OCI-LY7 (cell line): ENCODE measurements at regions of chr3 and their contacts with region 1.

Region 1: DNA sequence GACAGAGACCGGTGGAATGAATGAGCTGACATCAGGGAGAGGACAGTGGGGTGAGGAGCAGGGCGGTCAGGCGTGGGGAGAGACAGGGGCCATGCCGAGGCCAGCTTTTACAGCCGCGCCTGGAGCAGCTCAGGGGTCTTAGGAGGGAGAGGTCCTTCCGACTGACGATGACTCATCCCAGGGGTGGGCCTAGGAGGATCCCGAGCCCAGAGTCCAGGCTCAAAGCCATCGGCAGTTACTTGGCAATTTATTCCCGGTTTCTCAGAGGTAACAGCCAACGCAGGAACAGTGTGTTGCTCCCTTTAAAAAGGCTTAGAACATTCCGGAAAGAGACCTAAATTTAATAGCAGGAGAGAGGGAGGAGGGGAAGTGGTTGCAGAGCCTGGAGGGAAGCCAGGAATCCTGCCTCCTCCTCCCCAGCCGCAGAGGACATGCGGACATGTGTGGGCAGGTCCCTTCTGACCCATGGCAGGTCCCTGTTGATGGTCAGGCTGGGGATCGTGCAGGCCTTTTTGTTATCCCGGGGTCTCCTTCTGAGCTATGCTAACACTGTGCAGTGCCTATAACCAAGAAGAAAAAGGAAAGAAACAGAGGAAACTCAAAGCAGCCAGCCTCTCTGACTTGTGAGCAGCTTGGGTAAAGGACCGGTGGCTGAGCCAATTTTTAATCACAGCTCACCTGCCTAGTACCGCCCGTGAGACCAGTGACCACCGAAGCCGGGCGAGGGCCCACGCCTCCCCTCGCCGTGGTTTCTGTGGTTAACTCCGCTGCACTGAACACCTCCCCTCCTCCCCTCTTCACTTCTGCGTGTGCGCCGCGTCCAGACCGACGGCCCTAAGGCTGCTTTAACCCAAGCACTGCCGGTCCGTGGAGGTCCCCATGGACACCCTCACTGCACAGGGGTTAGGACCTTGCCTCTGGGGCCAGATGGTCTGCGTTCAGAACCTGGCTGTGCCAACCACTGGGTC is 392.4 kb upstream of the PROK2 start:
- DNase-seq: peak; percentile 64
- H3K4me3 ChIP-seq: peak overlapping the region; percentile 33
- H3K27ac ChIP-seq: peak overlapping the region; percentile 51
- H3K4me1 ChIP-seq: peaks cover 39% of the 10 kb centered on the region
- CTCF ChIP-seq: no peak

Region 2: DNA sequence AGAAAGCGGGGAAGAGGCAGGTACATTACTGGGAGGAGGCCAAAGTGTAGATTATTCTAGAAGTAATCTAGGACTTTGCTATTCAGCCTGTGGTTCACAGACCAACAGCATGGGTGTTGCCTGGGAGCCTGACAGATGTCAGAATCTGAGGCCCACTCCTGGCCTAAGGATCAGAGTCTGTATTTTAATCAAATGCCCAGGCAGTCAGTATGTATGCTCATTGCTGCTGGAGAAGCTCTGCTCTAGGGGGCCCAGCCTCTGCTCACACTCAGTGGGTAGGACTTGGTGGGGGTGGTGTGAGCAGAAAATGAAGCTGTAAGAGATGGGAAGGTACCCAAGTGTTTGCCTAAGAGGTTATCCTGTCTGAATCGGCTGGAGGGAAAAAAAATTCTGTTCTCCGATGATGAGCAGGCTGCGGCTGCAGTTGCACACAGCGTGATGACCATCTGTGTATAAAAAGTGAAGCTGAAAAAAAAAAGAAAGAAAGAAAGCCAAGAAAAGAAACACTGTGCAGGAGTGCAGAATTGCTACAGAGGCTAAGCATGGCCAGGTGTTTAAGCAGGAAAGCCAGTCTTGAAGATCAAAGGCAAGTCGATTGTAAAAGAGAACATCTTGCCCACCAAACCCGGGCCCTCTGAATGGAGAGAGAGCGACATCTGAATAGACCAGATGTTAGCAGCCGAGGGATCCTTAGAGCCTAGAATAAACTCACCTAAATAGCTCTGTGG is 517.3 kb before region 1 on chr3:
- CTCF ChIA-PET with region 1: no interaction called
- POLR2A ChIA-PET with region 1: no interaction called
- intact Hi-C with region 1: loop called (anchors 10 kb)
- DNase-seq: peak; percentile 94
- H3K4me3 ChIP-seq: peak overlapping the region; percentile 30
- H3K27ac ChIP-seq: peak overlapping the region; percentile 92
- H3K4me1 ChIP-seq: peaks cover 56% of the 10 kb centered on the region
- CTCF ChIP-seq: no peak

Region 3: GRCh38 chr3:72196377-72196929 is 19.1 kb after region 1 on chr3:
- CTCF ChIA-PET with region 1: no interaction called
- POLR2A ChIA-PET with region 1: no interaction called
- intact Hi-C with region 1: no loop called
- DNase-seq: no peak
- H3K4me3 ChIP-seq: no peak overlapping the region
- H3K27ac ChIP-seq: no peak overlapping the region
- H3K4me1 ChIP-seq: no peaks in the 10 kb centered on the region
- CTCF ChIP-seq: no peak

Region 4: GRCh38 chr3:72439321-72440183 is 262.2 kb after region 1 on chr3:
- CTCF ChIA-PET with region 1: no interaction called
- POLR2A ChIA-PET with region 1: no interaction called
- intact Hi-C with region 1: loop called (anchors 2 kb)
- DNase-seq: peak; percentile 37
- H3K4me3 ChIP-seq: peak overlapping the region; percentile 43
- H3K27ac ChIP-seq: peak overlapping the region; percentile 31
- H3K4me1 ChIP-seq: peaks cover 58% of the 10 kb centered on the region
- CTCF ChIP-seq: no peak